Lower leg skin (tissue), 4 donors: ENCODE measurements at regions of chr20 and their contacts with region 1.

Region 1: GRCh38 chr20:37534401-37535157 is 6.9 kb upstream of the BLCAP start:
- DNase-seq: peak; percentile 76 to 77
- H3K4me3 ChIP-seq: no peak overlapping the region
- CTCF ChIP-seq: peak in 1 of 3 donors; percentile 61
- POLR2A ChIP-seq: no peak

Region 2: GRCh38 chr20:37192137-37192854 is 342.3 kb before region 1 on chr20:
- intact Hi-C with region 1: loop called (anchors 10 kb)
- DNase-seq: peak; percentile 84 to 95
- H3K4me3 ChIP-seq: no peak overlapping the region
- CTCF ChIP-seq: peak in 1 of 3 donors; percentile 53
- POLR2A ChIP-seq: no peak

Region 3: DNA sequence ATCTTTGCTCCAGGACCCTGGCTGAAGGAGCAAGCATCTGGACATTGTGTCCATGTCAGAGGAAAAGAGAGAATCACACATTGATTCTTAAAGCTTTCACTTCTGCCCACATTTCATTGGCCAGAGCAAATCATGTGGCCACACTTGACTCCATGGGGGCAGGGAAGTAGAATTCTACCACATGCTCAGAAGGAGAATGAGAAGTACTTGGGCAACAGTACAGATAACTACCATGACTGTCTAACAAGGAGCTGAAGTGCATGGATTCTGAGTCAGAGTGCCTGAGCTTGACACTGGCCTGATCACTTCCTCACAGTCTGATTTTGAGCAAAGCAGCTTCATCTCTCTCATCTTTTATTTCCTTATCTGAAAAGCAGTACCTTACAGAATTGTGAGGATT is 311.5 kb before region 1 on chr20:
- intact Hi-C with region 1: no loop called
- DNase-seq: peak in 1 of 2 donors; percentile 74
- H3K4me3 ChIP-seq: no peak overlapping the region
- CTCF ChIP-seq: no peak
- POLR2A ChIP-seq: no peak

Region 4: DNA sequence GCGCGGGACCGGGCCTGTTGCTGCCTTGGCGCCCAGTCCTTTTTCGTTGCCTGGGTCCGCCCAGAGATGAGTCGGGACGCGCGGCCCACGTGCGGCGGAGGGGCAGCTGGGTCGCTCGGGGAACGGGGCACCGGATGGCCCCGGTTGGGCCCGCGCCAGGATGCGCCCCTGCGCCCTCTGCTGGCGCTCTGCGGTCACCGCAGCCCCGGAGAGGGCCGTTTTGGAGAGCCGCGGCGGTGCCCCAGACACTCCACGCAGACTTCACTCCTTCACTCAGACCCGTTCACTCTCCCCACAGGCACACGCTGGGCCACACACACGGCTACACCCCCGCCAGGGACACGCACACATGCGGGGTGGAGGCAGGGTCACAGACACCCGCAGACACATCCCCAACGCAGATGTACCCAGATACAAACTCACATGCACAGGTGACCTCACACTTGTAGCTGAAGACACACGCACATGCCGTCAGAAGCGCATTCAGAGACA is 149.8 kb before region 1 on chr20:
- intact Hi-C with region 1: loop called (anchors 10 kb)
- DNase-seq: peak; percentile 43 to 93
- H3K4me3 ChIP-seq: no peak overlapping the region
- CTCF ChIP-seq: peak in 1 of 3 donors; percentile 69
- POLR2A ChIP-seq: no peak